ENCODE measurements at regions of chr2 and their contacts with region 1.

Region 1: GRCh38 chr2:160994141-160995002 is 165.9 kb upstream of the TANK start:
- DNase-seq: peak; percentile 84
- ATAC-seq: peak; percentile 93
- H3K4me3 Mint-ChIP-seq: no peak overlapping the region
- H3K27ac Mint-ChIP-seq: no peak overlapping the region
- H3K4me1 Mint-ChIP-seq: peaks cover 7% of the 10 kb centered on the region
- H3K27me3 Mint-ChIP-seq: no peaks in the 10 kb centered on the region
- CTCF ChIP-seq: peak; percentile 90

Region 2: GRCh38 chr2:160109936-160110673 is 884.3 kb before region 1 on chr2:
- CTCF ChIA-PET with region 1: interaction called, 33 read pairs
- POLR2A ChIA-PET with region 1: no interaction called
- intact Hi-C with region 1: loop called (anchors 5 kb)
- DNase-seq: peak; percentile 63
- ATAC-seq: peak; percentile 76
- H3K4me3 Mint-ChIP-seq: no peak overlapping the region
- H3K27ac Mint-ChIP-seq: no peak overlapping the region
- H3K4me1 Mint-ChIP-seq: no peaks in the 10 kb centered on the region
- H3K27me3 Mint-ChIP-seq: peaks cover 12% of the 10 kb centered on the region
- CTCF ChIP-seq: peak; percentile 87

Region 3: GRCh38 chr2:160252278-160252887 is 742.0 kb before region 1 on chr2:
- CTCF ChIA-PET with region 1: interaction called, 11 read pairs
- POLR2A ChIA-PET with region 1: no interaction called
- intact Hi-C with region 1: loop called (anchors 5 kb)
- DNase-seq: no peak
- ATAC-seq: no peak
- H3K4me3 Mint-ChIP-seq: no peak overlapping the region
- H3K27ac Mint-ChIP-seq: no peak overlapping the region
- H3K4me1 Mint-ChIP-seq: no peaks in the 10 kb centered on the region
- H3K27me3 Mint-ChIP-seq: no peaks in the 10 kb centered on the region
- CTCF ChIP-seq: peak; percentile 79

Region 4: DNA sequence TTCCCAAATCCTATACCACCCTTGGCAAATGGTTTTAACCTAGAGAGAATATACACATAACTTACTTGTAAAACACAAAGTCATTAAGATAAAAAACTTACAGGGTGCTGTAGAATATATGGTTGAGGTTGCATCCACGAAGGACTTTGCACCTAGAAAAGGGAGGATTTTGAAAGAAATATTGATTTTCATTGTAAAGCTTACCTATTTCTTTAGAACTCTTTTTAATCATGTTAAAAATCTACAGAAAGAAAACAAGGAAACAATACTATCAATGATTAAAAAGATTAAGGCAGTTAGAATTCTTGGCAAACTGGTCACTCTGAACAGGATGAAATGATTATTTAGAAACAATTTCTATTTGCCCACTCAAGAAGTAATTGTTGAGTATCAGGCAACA is 713.2 kb before region 1 on chr2:
- CTCF ChIA-PET with region 1: no interaction called
- POLR2A ChIA-PET with region 1: no interaction called
- intact Hi-C with region 1: no loop called
- DNase-seq: no peak
- ATAC-seq: no peak
- H3K4me3 Mint-ChIP-seq: no peak overlapping the region
- H3K27ac Mint-ChIP-seq: peak overlapping the region; percentile 45
- H3K4me1 Mint-ChIP-seq: peaks cover 32% of the 10 kb centered on the region
- H3K27me3 Mint-ChIP-seq: no peaks in the 10 kb centered on the region
- CTCF ChIP-seq: no peak

Region 5: GRCh38 chr2:160324161-160324800 is 670.1 kb before region 1 on chr2:
- CTCF ChIA-PET with region 1: interaction called, 29 read pairs
- POLR2A ChIA-PET with region 1: no interaction called
- intact Hi-C with region 1: no loop called
- DNase-seq: peak; percentile 74
- ATAC-seq: no peak
- H3K4me3 Mint-ChIP-seq: no peak overlapping the region
- H3K27ac Mint-ChIP-seq: no peak overlapping the region
- H3K4me1 Mint-ChIP-seq: peaks cover 81% of the 10 kb centered on the region
- H3K27me3 Mint-ChIP-seq: no peaks in the 10 kb centered on the region
- CTCF ChIP-seq: peak; percentile 77

Region 6: GRCh38 chr2:160332318-160332717 is 662.1 kb before region 1 on chr2:
- CTCF ChIA-PET with region 1: interaction called, 4 read pairs
- POLR2A ChIA-PET with region 1: no interaction called
- intact Hi-C with region 1: loop called (anchors 10 kb)
- DNase-seq: peak; percentile 22
- ATAC-seq: peak; percentile 45
- H3K4me3 Mint-ChIP-seq: peak overlapping the region; percentile 11
- H3K27ac Mint-ChIP-seq: peak overlapping the region; percentile 76
- H3K4me1 Mint-ChIP-seq: peaks cover 91% of the 10 kb centered on the region
- H3K27me3 Mint-ChIP-seq: no peaks in the 10 kb centered on the region
- CTCF ChIP-seq: no peak

Region 7: GRCh38 chr2:160963957-160964356 is 30.4 kb before region 1 on chr2:
- CTCF ChIA-PET with region 1: interaction called, 12 read pairs
- POLR2A ChIA-PET with region 1: no interaction called
- intact Hi-C with region 1: no loop called
- DNase-seq: no peak
- ATAC-seq: no peak
- H3K4me3 Mint-ChIP-seq: no peak overlapping the region
- H3K27ac Mint-ChIP-seq: no peak overlapping the region
- H3K4me1 Mint-ChIP-seq: no peaks in the 10 kb centered on the region
- H3K27me3 Mint-ChIP-seq: peaks cover 4% of the 10 kb centered on the region
- CTCF ChIP-seq: no peak

Region 8: DNA sequence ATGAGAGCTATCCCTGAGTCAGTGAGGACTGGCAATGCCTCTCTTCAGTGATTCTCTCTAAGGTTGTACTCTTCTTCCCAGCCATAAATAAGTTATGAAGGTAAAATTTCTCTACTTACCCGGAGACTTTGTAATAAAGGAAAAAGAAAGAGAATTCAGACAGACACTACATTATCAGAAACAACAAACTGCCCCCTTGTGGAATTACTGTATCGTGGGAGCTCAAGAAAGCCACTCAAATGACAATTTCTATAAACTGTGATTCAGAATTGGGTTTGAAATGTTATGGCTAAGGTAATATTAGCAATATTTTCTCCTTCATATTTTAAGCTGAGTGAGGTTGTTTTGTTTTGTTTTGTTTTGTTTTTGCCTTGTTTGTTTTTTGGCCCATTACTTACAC is 10.0 kb after region 1 on chr2:
- CTCF ChIA-PET with region 1: interaction called, 28 read pairs
- POLR2A ChIA-PET with region 1: interaction called, 3 read pairs
- intact Hi-C with region 1: no loop called
- DNase-seq: no peak
- ATAC-seq: no peak
- H3K4me3 Mint-ChIP-seq: no peak overlapping the region
- H3K27ac Mint-ChIP-seq: no peak overlapping the region
- H3K4me1 Mint-ChIP-seq: no peaks in the 10 kb centered on the region
- H3K27me3 Mint-ChIP-seq: peaks cover 7% of the 10 kb centered on the region
- CTCF ChIP-seq: peak; percentile 32

Measured in activated CD8-positive, alpha-beta T cell treated with anti-CD3 and anti-CD28 coated beads for 36 hours (primary cell).